ENCODE measurements at regions of chr5 and their contacts with region 1.

Region 1: GRCh38 chr5:34459908-34460307 is 196.2 kb upstream of the RAI14 start:
- DNase-seq: no peak
- ATAC-seq: no peak
- H3K4me3 ChIP-seq: no peak overlapping the region
- H3K4me3 Mint-ChIP-seq: no peak overlapping the region
- H3K27ac ChIP-seq: no peak overlapping the region
- H3K27ac Mint-ChIP-seq: no peak overlapping the region
- H3K4me1 ChIP-seq: no peaks in the 10 kb centered on the region
- H3K4me1 Mint-ChIP-seq: peaks cover 0 to 2% (median 2%) of the 10 kb centered on the region in 3 donors
- H3K27me3 ChIP-seq: no peaks in the 10 kb centered on the region
- H3K27me3 Mint-ChIP-seq: peaks cover 0 to 16% of the 10 kb centered on the region in 2 donors

Region 2: DNA sequence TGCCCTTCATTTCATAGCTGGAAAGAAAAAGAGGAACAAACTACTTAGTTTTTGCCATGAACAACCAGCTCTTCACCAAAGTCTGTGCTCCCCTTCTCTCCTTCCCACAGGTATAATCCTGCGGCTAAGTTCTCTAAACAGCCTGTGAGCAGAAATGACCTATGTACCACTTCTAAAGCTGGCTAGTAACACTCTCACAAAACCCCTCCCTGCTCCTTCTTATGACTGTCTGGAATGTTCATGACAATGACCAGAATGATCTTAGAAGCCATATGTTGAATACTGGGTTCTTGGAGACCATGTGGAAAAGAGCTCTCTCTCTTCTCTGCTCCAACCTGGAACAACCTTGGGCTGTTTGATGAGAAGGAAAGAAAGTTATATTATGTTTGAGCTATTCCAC is 439.2 kb before region 1 on chr5:
- CTCF ChIA-PET with region 1: interaction called, 3 to 10 read pairs
- POLR2A ChIA-PET with region 1: no interaction called
- DNase-seq: no peak
- ATAC-seq: no peak
- H3K4me3 ChIP-seq: no peak overlapping the region
- H3K4me3 Mint-ChIP-seq: no peak overlapping the region
- H3K27ac ChIP-seq: no peak overlapping the region
- H3K27ac Mint-ChIP-seq: no peak overlapping the region
- H3K4me1 ChIP-seq: peaks cover 7 to 12% of the 10 kb centered on the region in 2 experiments
- H3K4me1 Mint-ChIP-seq: peaks cover 19 to 26% (median 19%) of the 10 kb centered on the region in 3 donors
- H3K27me3 ChIP-seq: no peaks in the 10 kb centered on the region
- H3K27me3 Mint-ChIP-seq: no peaks in the 10 kb centered on the region

Region 3: DNA sequence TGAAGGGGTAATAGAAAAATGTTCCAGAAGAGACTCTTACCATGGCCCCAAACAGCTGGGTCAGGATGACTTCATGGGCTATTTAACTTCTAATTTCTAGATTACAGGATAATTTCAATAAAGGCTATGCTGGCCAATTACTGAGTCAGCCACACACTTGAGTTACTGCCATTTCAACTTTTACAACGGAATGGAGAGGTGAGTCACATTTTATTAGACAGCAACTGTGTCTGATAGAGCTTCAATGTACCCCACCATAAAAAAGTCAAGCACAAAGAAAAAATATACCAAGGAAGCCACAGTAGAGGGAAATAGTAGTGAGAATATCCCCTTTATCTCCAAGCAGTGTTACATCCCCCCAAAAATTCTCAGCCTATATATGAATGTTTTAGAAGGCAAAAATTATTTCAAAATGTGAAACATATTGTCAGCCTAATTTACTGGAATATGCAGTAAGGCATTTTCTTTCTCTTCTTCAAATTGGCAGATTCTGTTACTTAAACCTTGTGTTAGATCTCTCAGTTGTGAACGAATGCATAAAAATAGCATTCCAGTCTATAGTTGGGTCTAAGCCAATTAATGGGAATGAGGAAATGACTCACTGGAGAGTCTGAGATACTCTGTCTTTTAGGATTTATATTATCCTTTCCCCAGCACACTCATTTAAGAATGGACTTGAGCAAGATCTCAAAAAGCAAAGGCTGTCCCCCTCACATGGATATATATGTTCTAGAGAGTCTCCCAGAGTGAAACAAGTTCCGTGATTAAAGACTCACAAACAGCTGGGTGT is 149.1 kb after region 1 on chr5:
- CTCF ChIA-PET with region 1: no interaction called
- POLR2A ChIA-PET with region 1: no interaction called
- DNase-seq: no peak
- ATAC-seq: no peak
- H3K4me3 ChIP-seq: no peak overlapping the region
- H3K4me3 Mint-ChIP-seq: no peak overlapping the region
- H3K27ac ChIP-seq: no peak overlapping the region
- H3K27ac Mint-ChIP-seq: no peak overlapping the region
- H3K4me1 ChIP-seq: no peaks in the 10 kb centered on the region
- H3K4me1 Mint-ChIP-seq: no peaks in the 10 kb centered on the region
- H3K27me3 ChIP-seq: no peaks in the 10 kb centered on the region
- H3K27me3 Mint-ChIP-seq: peaks cover 7 to 15% of the 10 kb centered on the region in 2 donors

Region 4: DNA sequence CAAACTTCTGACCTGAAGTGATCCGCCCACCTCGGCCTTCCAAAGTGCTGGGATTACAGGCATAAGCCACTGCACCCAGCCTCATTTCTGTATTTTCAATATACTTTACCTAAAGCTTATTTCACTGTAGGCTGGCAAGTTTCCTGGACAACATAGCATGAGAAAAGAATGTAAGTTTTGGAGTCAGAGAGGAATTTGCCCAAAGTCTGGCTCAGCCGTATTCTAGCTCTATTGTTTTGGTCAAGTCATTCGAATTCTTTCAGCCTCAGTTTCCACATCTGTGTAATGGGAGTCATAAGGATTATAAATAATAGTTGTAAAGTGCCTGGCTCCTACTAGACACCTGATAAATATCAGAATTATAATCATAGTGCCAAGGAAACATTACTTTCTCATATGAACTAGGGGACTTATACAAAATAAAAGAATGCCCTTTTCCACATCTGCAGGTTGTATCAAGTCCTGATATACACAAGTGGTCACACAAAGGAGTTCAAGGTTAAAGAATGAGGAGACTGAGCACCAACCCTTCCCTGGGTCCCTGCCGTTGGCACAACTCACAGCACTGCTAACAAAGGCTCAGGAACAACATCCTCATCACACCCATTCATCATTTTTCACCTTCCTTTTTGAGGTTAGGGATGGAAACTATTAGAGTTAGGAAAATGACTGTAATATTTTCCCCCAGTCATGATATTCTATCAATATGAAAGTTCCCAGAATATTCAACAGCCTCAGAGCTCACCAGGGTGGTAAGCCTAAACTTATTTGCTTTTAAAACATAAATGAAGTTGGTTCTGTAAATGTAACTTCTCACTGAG is 161.6 kb after region 1 on chr5:
- CTCF ChIA-PET with region 1: no interaction called
- POLR2A ChIA-PET with region 1: no interaction called
- DNase-seq: no peak
- ATAC-seq: no peak
- H3K4me3 ChIP-seq: no peak overlapping the region
- H3K4me3 Mint-ChIP-seq: no peak overlapping the region
- H3K27ac ChIP-seq: no peak overlapping the region
- H3K27ac Mint-ChIP-seq: no peak overlapping the region
- H3K4me1 ChIP-seq: no peaks in the 10 kb centered on the region
- H3K4me1 Mint-ChIP-seq: no peaks in the 10 kb centered on the region
- H3K27me3 ChIP-seq: peaks cover 0 to 2% of the 10 kb centered on the region in 2 experiments
- H3K27me3 Mint-ChIP-seq: peaks cover 3 to 30% of the 10 kb centered on the region in 2 donors

Measured in T-cell (primary cell).